ENCODE measurements at regions of chr20 and their contacts with region 1.

Region 1: DNA sequence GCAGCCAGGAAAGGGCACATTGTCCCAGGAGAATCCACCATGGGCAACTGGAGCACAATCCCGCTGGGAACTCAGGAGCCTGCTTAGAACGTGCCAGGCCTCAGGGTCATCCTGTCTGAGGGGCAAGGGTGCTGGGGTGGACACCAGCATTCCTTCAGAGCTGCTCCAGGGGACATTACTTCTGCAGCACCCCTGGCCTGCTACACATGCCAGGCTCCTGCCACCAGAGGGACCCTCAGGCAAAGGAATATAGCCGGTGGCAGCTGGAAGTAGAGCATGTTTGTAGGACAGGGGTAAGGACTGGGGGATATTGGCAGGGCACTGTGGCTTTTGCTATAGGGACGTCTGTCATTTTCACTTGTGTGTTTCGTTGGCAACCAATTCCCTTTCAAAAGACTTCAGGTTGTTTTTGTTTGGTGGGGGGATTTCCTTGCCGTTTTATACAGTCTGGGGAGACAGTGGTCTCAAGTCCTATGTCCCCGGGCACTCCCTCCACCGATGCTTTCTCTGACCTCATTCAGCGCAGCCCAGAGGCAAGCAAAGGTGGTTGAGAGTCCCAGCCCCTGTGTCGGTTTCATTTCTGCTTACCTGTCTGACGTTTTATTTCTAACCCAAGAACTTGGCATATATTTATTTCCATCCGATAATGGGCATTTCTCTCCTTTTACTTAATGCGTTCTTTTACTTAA is 130.8 kb downstream of the JPH2 start:
- DNase-seq: peak; percentile 47 to 82 (median 70)
- ATAC-seq: peak; percentile 98
- H3K4me3 ChIP-seq: no peak overlapping the region
- H3K4me3 Mint-ChIP-seq: no peak overlapping the region
- H3K27ac ChIP-seq: no peak overlapping the region
- H3K27ac Mint-ChIP-seq: peak overlapping the region; percentile 28
- H3K4me1 ChIP-seq: peaks cover 4% of the 10 kb centered on the region
- H3K4me1 Mint-ChIP-seq: peaks cover 23% of the 10 kb centered on the region
- H3K27me3 ChIP-seq: no peaks in the 10 kb centered on the region
- H3K27me3 Mint-ChIP-seq: peaks cover 2% of the 10 kb centered on the region
- CTCF ChIP-seq: peak; percentile 61

Region 2: DNA sequence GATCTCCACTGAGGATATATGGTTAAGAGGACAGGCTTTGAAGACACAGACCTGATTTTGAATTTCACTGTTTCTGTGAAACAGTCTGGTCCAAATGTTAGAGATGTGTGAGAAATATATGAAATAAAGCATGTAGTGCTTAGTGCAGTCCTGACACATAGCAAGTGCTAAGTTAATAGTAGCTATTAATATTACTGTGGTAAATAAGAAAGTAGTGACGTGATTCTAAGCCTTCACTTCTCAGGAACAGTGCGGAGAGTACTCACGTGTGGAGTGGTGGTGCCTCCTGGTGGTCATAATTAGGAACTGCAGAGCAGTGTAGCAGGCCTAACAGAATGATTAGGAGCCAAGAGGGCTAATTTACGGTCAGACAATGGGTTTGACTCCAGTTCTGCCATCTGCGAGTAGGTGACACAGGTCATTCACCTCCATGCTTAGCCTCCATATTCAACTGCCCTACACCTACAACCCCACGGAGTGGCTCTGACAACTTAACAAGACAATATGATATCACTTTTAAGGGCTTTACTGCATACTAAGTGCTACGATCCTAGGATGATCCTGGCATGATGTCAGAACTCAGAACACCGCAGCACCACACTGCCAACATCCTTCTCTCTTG is 24.6 kb after region 1 on chr20:
- CTCF ChIA-PET with region 1: interaction called, 266 read pairs
- POLR2A ChIA-PET with region 1: interaction called, 3 read pairs
- intact Hi-C with region 1: loop called (anchors 1 kb)
- DNase-seq: peak; percentile 61 to 88 (median 79)
- ATAC-seq: peak; percentile 99
- H3K4me3 ChIP-seq: no peak overlapping the region
- H3K4me3 Mint-ChIP-seq: no peak overlapping the region
- H3K27ac ChIP-seq: no peak overlapping the region
- H3K27ac Mint-ChIP-seq: peak overlapping the region; percentile 2
- H3K4me1 ChIP-seq: peaks cover 7% of the 10 kb centered on the region
- H3K4me1 Mint-ChIP-seq: peaks cover 21% of the 10 kb centered on the region
- H3K27me3 ChIP-seq: no peaks in the 10 kb centered on the region
- H3K27me3 Mint-ChIP-seq: no peaks in the 10 kb centered on the region
- CTCF ChIP-seq: peak; percentile 98

Region 3: DNA sequence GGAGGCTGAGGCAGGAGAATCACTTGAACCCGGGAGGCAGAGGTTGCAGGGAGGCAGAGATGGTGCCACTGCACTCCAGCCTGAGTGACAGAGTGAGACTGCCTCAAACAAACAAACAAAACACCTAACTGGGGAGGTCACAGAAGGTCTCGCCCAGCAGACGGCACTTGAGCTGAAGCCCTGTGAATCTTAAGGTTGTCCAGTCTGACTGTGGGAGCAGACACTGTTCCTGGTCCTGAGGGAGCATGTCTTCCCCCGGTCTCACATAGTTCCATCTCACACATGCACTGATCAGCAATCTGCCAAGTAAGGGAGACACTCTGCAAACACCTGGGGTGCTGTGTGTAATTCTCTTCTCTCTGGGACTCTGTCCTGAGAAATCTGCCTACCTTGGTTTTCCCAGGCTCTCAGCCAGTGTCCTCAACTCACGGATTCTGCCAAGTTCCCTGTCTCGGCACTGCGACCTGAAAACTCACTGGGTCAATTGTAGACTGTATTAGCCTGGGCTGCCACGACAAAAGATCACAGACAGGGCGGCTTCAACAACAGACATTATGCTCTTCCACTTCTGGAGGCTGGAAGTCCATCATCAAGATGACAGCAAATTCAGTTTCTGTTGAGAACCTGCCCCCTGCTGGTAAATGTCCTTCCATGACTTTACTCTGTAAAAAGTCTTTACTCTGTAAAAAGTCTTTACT is 36.5 kb after region 1 on chr20:
- CTCF ChIA-PET with region 1: interaction called, 266 read pairs
- POLR2A ChIA-PET with region 1: no interaction called
- intact Hi-C with region 1: loop called (anchors 5 kb)
- DNase-seq: peak in 4 of 9 experiments; percentile 32 to 55 (median 42)
- ATAC-seq: no peak
- H3K4me3 ChIP-seq: no peak overlapping the region
- H3K4me3 Mint-ChIP-seq: no peak overlapping the region
- H3K27ac ChIP-seq: no peak overlapping the region
- H3K27ac Mint-ChIP-seq: no peak overlapping the region
- H3K4me1 ChIP-seq: no peaks in the 10 kb centered on the region
- H3K4me1 Mint-ChIP-seq: no peaks in the 10 kb centered on the region
- H3K27me3 ChIP-seq: no peaks in the 10 kb centered on the region
- H3K27me3 Mint-ChIP-seq: peaks cover 17% of the 10 kb centered on the region
- CTCF ChIP-seq: peak; percentile 49

Region 4: GRCh38 chr20:44187051-44187762 is 131.1 kb after region 1 on chr20 and contains the start of gene JPH2:
- CTCF ChIA-PET with region 1: interaction called, 8 read pairs
- POLR2A ChIA-PET with region 1: no interaction called
- intact Hi-C with region 1: loop called (anchors 1 to 5 kb)
- DNase-seq: no peak
- ATAC-seq: peak; percentile 11
- H3K4me3 ChIP-seq: peak within 1 kb of the TSS in 1 of 2 experiments; percentile 29
- H3K4me3 Mint-ChIP-seq: peak within 1 kb of the TSS; percentile 16
- H3K27ac ChIP-seq: no peak within 1 kb of the TSS
- H3K27ac Mint-ChIP-seq: no peak within 1 kb of the TSS
- H3K4me1 ChIP-seq: peaks cover 16% of the 10 kb centered on the region
- H3K4me1 Mint-ChIP-seq: peaks cover 9% of the 10 kb centered on the region
- H3K27me3 ChIP-seq: peaks cover 19 to 23% of the 10 kb centered on the region in 2 experiments
- H3K27me3 Mint-ChIP-seq: peaks cover 49% of the 10 kb centered on the region
- CTCF ChIP-seq: no peak
- total RNA-seq, gene JPH2: not detected

Region 5: DNA sequence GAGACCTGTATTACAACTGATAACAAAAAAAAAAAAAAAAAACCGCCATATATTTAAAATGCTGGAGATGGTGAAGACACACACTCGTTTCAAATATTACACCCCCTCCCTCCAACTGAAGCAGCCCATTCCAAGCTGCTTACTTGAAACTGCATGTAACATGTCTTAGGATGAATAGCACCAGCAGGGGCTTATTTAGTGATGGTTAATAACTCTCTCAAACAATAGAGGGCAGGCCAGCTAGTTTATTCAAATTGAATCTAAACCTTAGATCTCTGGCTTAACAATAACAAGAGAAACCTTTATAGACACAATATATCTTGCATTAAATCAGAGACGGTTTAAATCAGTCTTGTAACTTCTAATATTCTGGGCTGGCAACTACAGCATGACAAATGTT is 140.1 kb after region 1 on chr20:
- CTCF ChIA-PET with region 1: no interaction called
- POLR2A ChIA-PET with region 1: no interaction called
- intact Hi-C with region 1: loop called in 1 of 2 experiments (anchors 5 kb)
- DNase-seq: no peak
- ATAC-seq: peak; percentile 61
- H3K4me3 ChIP-seq: no peak overlapping the region
- H3K4me3 Mint-ChIP-seq: no peak overlapping the region
- H3K27ac ChIP-seq: no peak overlapping the region
- H3K27ac Mint-ChIP-seq: no peak overlapping the region
- H3K4me1 ChIP-seq: no peaks in the 10 kb centered on the region
- H3K4me1 Mint-ChIP-seq: peaks cover 24% of the 10 kb centered on the region
- H3K27me3 ChIP-seq: no peaks in the 10 kb centered on the region
- H3K27me3 Mint-ChIP-seq: no peaks in the 10 kb centered on the region
- CTCF ChIP-seq: no peak

Measured in CD8-positive, alpha-beta T cell (primary cell).